ENCODE measurements at regions of chr11 and their contacts with region 1.

Region 1: DNA sequence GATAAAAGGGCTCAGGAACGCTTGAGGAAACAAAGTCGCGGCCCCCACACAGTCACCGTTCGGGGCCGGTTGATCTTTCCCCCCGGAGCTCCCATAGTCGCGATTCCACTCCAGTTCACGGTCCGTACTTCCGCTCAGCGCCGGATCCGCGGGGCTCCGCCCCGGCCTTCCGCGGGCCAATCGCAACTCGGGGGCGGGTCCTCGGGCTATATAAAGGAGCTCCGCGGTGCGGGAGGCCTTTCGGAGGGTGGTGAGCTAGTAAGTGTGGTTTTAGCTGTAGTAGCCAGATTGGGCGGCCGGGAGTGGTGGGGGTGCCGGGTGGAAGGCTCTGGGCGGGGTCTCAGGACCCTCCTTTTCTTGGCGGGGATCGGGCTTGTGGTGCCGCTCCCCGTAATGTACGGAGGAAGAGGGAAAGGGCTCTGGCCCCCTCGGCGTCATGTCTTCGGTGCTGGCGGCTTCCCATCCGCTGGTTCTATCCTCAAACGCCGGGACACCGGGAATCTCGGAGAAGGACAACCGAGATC is at the starts of genes C11orf98 and CSKMT:
- DNase-seq: peak; percentile 94
- H3K4me3 ChIP-seq: peak within 1 kb of the TSS; percentile 86
- H3K27ac ChIP-seq: peak within 1 kb of the TSS; percentile 94
- H3K4me1 ChIP-seq: peaks cover 40% of the 10 kb centered on the region
- CTCF ChIP-seq: no peak
- total RNA-seq, gene C11orf98: 148 and 194 TPM in 2 replicates
- total RNA-seq, gene CSKMT: 88.4 and 90.8 TPM in 2 replicates

Region 2: DNA sequence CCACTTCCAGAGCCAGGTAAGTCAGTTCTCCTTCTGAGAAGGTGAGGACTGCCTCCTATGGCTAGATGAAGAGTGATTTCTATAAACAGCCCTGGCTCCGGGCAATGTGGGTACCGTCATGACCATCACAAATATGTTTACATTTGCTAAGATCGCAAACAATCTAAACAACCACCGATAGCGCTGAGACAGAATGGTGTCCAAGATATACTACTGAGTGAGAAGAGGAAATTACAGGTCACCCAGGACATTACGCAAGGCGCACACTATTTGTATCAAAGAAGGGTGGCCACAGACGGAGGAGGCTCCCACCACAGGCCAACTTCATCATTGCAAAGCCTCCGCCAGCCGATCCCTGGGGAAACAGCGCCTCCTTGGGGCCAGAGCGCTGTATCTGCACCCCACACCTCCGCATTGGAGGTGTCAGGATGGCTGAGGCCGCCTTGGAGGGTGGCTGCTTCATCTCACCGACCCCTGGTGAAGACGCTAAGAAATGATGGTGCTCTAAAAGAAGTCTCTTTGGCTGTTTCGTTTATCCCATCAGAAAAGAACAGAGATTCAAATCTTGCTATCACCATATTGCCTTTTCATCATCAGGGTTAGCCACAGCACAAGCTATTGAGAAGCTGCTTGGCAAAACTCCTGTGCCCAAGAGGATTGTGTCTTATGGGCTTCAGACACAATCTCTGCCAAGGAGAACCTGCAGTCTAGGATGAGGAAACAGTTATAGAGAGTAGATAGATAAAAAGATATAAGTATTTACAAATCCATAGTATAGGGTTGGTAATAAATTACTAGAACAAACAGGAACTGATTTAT is 340.2 kb before region 1 on chr11:
- CTCF ChIA-PET with region 1: no interaction called
- POLR2A ChIA-PET with region 1: no interaction called
- intact Hi-C with region 1: no loop called
- DNase-seq: peak; percentile 53
- H3K4me3 ChIP-seq: no peak overlapping the region
- H3K27ac ChIP-seq: no peak overlapping the region
- H3K4me1 ChIP-seq: peaks cover 4% of the 10 kb centered on the region
- CTCF ChIP-seq: peak; percentile 83

Region 3: DNA sequence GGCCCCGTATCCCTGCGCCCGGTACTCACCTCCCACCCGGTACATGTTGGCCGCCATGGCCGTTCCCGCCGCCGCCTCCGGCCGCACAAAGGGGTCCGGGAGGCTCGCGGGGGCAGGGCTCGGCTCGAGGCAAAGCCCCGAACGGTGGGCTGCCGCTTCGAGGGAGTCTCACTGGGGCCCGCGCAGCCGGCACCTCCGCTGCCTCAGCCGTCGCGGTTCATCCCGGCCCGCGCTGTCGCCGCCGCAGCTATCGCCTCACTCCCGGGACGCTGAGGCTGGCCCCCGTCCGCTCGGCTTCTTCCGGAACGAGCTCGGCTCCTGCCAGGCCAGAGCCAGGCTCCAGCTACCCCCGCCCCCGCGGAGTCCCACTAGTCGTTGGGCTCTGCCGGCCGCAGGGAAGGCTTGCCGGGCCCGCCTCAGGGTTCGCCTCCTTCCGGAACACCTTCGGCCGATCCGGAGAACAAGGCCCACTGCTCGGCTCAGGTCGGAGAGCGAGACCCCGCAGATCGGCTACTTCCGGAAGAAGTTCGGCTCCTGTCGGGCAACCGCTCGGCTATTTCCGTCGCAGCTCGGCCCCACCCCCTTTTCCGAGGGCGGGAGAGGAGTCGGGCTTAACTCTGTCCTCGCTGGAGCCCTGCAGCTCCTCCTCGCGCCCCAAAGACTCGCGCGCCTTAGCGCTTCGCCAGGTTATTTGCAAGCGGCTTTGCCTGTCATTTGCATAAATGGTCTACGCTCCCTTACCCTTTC is 63.6 kb before region 1 on chr11 and contains the start of gene MTA2:
- CTCF ChIA-PET with region 1: no interaction called
- POLR2A ChIA-PET with region 1: interaction called, 7 read pairs
- intact Hi-C with region 1: loop called (anchors 2 kb)
- DNase-seq: peak; percentile 99
- H3K4me3 ChIP-seq: peak within 1 kb of the TSS; percentile 98
- H3K27ac ChIP-seq: peak within 1 kb of the TSS; percentile 87
- H3K4me1 ChIP-seq: peaks cover 24% of the 10 kb centered on the region
- CTCF ChIP-seq: no peak
- total RNA-seq, gene MTA2: 130 and 133 TPM in 2 replicates

Region 4: GRCh38 chr11:62621567-62622470 is 43.3 kb before region 1 on chr11 and contains the start of gene B3GAT3:
- CTCF ChIA-PET with region 1: no interaction called
- POLR2A ChIA-PET with region 1: interaction called, 17 read pairs
- intact Hi-C with region 1: no loop called
- DNase-seq: peak; percentile 99
- H3K4me3 ChIP-seq: peak within 1 kb of the TSS; percentile 79
- H3K27ac ChIP-seq: peak within 1 kb of the TSS; percentile 83
- H3K4me1 ChIP-seq: peaks cover 25% of the 10 kb centered on the region
- CTCF ChIP-seq: 0 out of 2 replicates have a peak, but pooled peaks have one; percentile 20
- total RNA-seq, gene B3GAT3: 55.8 and 74.3 TPM in 2 replicates

Region 5: DNA sequence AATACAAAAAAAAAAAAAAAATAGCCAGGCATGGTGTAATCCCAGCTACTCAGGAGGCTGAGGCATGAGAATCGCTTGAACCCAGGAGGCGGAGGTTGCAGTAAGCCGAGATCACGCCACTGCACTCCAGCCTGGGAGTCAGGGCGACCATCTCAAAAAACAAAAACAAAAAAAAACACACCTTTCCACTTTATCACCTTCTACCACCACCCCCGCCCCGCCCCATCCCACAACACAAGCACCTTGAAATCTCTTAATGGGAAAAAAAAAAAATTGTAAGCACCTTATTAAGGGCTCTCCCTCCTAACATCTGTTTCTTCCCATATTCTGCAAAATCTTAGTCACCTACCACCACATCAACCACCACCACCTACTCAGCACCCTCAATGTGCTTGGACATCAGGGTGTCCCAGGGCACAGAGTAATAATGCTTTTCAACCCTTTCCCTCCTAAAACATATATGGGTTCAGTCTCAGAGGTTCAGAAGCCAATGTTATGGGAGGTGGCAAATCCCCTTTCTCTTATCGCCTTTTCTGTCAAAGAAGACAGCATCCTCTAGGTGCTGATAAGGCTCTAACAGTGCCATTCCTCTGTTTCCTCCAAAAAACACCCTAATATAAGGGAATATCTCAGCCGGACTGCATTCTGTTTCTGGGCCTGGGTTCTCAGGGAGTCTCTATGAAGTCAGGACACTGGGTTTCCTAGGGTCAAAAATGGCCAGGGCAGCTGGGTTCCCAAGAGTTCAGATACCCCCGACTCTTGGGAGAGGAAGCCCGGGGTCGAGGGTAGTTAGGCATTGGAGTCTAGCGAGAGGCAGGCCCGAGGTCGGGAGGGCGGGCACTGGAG is 12.8 kb before region 1 on chr11:
- CTCF ChIA-PET with region 1: interaction called, 3 read pairs
- POLR2A ChIA-PET with region 1: interaction called, 159 read pairs
- intact Hi-C with region 1: loop called (anchors 1 kb)
- DNase-seq: no peak
- H3K4me3 ChIP-seq: peak overlapping the region; percentile 97
- H3K27ac ChIP-seq: peak overlapping the region; percentile 73
- H3K4me1 ChIP-seq: peaks cover 26% of the 10 kb centered on the region
- CTCF ChIP-seq: no peak

Region 6: DNA sequence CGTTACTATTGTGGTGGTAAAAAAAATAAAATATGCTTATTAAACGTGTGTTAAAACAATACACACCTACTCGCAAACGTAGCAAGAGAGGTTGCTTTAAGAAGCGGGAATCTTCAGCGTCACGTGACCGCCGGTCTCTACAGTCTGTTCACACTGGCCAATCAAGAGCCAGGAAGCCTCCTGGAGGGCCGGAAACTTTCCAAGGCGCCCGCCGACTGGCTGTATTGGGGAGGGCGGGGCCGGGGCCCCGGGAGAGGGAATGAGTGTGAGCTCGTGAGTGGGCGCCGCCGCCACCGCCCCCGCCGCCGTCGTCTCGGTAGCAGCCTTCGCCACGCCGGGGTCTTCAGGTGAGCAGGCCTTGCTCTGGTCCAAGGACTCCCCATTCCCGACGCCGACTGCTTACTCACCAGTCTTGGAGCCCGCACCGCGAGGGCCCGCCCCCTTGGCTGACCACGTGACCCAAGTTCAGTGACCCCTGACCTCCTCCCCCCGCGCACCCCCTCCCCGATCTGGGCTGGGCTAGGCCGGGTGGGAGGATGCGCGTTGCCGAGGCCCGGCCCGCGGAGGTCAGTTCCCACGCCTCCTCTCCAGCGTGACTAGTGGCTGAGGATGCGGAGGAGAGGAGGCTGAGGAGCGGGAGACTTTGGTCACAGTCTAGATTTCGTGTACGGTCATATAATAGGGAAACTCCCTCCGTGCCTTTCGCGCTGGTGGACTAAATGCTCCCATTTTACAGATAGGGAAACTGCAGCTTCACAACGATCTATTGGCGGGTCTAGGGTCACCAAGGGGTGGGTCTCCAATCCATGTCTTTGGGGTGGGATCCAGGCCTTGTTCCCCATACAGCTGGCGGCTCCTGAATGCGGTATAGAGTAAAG is 106.2 kb after region 1 on chr11 and contains the start of gene TAF6L:
- CTCF ChIA-PET with region 1: no interaction called
- POLR2A ChIA-PET with region 1: interaction called, 13 read pairs
- intact Hi-C with region 1: loop called (anchors 5 kb)
- DNase-seq: peak; percentile 94
- H3K4me3 ChIP-seq: peak within 1 kb of the TSS; percentile 77
- H3K27ac ChIP-seq: peak within 1 kb of the TSS; percentile 71
- H3K4me1 ChIP-seq: peaks cover 32% of the 10 kb centered on the region
- CTCF ChIP-seq: no peak
- total RNA-seq, gene TAF6L: 23.7 and 26.1 TPM in 2 replicates

Measured in OCI-LY7 (cell line).